ENCODE measurements at regions of chr11 and their contacts with region 1.

Region 1: GRCh38 chr11:68632802-68633201 is 51.5 kb upstream of the GAL start:
- DNase-seq: peak; percentile 50
- H3K4me3 ChIP-seq: no peak overlapping the region
- H3K27ac ChIP-seq: no peak overlapping the region
- H3K4me1 ChIP-seq: no peaks in the 10 kb centered on the region
- H3K27me3 ChIP-seq: no peaks in the 10 kb centered on the region
- CTCF ChIP-seq: peak; percentile 69 to 83

Region 2: GRCh38 chr11:68584097-68584496 is 48.7 kb before region 1 on chr11:
- CTCF ChIA-PET with region 1: no interaction called
- dilution Hi-C with region 1: loop called (anchors 5 kb)
- in situ Hi-C with region 1: no loop called
- intact Hi-C with region 1: no loop called
- DNase-seq: peak; percentile 3
- H3K4me3 ChIP-seq: no peak overlapping the region
- H3K27ac ChIP-seq: no peak overlapping the region
- H3K4me1 ChIP-seq: peaks cover 8% of the 10 kb centered on the region
- H3K27me3 ChIP-seq: no peaks in the 10 kb centered on the region
- CTCF ChIP-seq: peak; percentile 67 to 71

Region 3: DNA sequence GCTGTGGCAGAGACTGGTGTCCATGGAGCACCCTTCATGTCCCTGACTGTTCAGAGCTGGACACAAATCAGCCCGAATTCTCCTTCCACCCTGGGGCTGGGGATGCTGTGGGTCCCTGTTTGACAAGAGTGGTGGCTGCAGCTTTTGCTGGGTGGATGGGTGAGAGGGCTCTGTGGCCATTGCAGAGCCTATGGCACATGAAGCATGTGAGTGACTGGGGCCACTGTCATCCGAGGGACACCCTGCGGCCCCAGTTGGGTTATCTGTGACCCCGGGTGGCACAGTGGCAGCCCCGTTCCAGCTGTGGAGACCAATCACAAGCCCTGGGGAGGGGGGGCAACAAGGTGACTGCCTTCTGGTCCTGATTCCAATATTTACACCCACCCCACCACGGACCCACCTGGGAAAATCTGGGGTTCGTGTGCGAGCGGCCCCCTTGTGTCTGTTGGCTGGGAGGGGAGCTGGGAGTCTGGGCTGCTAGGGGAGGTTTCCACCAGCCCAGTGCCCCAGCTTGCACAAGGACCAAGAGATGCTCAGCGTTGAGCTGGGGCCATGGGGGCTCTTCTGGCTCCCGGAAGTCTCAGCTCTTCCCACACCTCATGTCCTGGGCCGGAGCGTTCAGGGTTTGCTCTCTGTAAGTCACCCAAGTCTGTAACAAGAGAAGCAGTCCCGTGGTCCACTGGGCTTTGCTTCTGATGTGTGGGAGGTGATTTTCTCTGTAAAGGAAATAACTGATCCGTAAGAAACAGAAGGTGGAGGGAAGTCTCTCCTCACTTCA is 28.9 kb after region 1 on chr11:
- CTCF ChIA-PET with region 1: no interaction called
- dilution Hi-C with region 1: loop called (anchors 5 kb)
- in situ Hi-C with region 1: no loop called
- intact Hi-C with region 1: no loop called
- DNase-seq: no peak
- H3K4me3 ChIP-seq: no peak overlapping the region
- H3K27ac ChIP-seq: no peak overlapping the region
- H3K4me1 ChIP-seq: no peaks in the 10 kb centered on the region
- H3K27me3 ChIP-seq: peaks cover 2% of the 10 kb centered on the region
- CTCF ChIP-seq: no peak

Region 4: DNA sequence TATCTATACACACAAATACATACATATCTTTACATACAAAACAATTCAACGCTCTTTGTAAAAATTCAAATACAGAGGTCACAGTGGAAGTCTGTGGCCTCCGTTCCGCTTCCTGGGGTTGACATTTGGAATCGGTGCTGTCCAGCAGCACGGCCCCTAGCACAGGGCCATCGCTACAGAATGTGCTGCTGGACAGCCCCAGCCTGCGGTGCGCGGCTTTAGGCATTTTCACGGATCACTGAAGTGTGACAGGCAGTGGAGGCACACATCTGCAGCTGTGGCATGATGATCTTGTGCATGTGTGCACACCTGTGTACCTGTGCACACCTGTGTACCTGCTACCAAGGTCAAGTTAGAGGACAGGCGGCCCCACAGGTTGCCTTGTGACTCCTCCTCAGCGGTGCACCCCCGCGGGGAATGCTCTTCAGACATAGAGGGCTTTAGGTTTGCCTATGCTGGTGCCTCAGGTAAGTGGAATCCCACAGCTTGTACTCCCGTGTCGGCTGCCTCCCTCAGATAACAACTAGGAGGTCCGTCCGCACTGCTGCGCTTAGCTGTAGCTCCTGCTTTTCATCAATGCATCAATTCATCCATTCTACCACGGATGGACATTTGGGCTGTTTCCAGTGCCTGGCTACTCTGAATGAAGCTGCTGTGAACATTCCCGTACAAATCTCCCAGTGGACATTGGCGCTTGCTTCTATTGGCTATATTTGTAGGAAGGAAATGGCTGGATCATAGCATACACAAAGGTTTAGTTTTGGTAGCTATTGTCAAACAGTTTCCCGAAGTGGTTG is 81.5 kb after region 1 on chr11:
- CTCF ChIA-PET with region 1: no interaction called
- dilution Hi-C with region 1: loop called (anchors 5 kb)
- in situ Hi-C with region 1: no loop called
- intact Hi-C with region 1: no loop called
- DNase-seq: no peak
- H3K4me3 ChIP-seq: no peak overlapping the region
- H3K27ac ChIP-seq: no peak overlapping the region
- H3K4me1 ChIP-seq: no peaks in the 10 kb centered on the region
- H3K27me3 ChIP-seq: no peaks in the 10 kb centered on the region
- CTCF ChIP-seq: no peak

Region 5: DNA sequence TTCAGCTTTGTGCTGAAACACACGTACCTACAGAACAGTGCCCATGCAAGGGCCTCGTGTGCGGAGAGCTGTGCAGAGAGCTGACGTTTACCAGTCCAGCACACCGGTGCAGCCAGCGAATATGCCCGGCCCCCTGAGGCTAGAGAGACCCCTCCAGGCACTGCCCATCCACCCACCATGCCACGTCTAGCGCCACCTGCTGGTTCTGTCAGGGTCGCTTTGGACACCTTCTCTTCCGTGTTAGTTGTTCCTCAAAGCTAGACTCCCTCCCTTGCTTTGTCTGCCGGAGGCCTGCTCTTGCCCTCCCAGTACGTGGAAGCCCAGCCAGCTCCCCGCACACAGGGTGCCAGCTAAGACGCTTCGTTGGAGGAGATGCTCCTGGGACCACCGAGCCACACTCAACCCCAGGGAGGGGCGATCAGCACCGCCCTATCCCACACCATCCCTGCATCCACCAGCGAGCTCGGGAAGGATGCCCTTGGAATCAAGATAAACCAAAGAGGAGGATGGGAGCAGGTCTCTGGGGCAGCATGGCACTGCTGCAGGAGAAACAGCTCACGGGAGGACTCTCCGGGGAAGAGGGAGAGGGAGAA is 165.5 kb after region 1 on chr11:
- CTCF ChIA-PET with region 1: no interaction called
- dilution Hi-C with region 1: no loop called
- in situ Hi-C with region 1: no loop called
- intact Hi-C with region 1: loop called (anchors 2 kb)
- DNase-seq: no peak
- H3K4me3 ChIP-seq: no peak overlapping the region
- H3K27ac ChIP-seq: no peak overlapping the region
- H3K4me1 ChIP-seq: no peaks in the 10 kb centered on the region
- H3K27me3 ChIP-seq: no peaks in the 10 kb centered on the region
- CTCF ChIP-seq: peak; percentile 41 to 62

Region 6: GRCh38 chr11:69044111-69045013 is 411.6 kb after region 1 on chr11:
- CTCF ChIA-PET with region 1: no interaction called
- dilution Hi-C with region 1: no loop called
- in situ Hi-C with region 1: no loop called
- intact Hi-C with region 1: loop called (anchors 2 kb)
- DNase-seq: peak; percentile 41
- H3K4me3 ChIP-seq: no peak overlapping the region
- H3K27ac ChIP-seq: no peak overlapping the region
- H3K4me1 ChIP-seq: peaks cover 3% of the 10 kb centered on the region
- H3K27me3 ChIP-seq: no peaks in the 10 kb centered on the region
- CTCF ChIP-seq: peak; percentile 47 to 71

Region 7: DNA sequence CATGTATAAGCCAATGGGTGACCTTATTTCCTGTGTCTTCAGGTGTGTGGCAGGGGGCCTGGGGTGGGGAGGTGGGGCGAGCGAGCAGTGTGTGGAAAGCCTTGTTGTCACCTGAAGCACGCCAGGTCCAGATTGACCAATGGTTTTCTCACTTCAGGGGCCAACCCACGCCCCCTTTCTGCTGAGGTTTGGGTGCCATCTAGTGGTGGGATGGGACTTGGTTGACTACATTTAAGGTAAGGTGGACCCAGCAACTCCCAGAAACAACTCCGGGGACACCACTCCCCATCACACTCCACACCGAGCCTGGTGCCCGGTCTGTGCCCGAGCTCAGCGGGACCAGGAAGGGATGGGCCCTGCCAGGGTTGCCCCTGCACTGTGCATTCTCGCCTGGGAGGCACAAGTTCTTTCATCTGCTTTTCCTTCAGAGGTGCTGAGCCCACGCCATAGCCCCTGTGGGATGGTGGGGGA is 455.9 kb after region 1 on chr11:
- CTCF ChIA-PET with region 1: no interaction called
- dilution Hi-C with region 1: no loop called
- in situ Hi-C with region 1: loop called in 1 of 2 experiments (anchors 25 kb)
- intact Hi-C with region 1: no loop called
- DNase-seq: peak; percentile 70
- H3K4me3 ChIP-seq: no peak overlapping the region
- H3K27ac ChIP-seq: no peak overlapping the region
- H3K4me1 ChIP-seq: peaks cover 7% of the 10 kb centered on the region
- H3K27me3 ChIP-seq: no peaks in the 10 kb centered on the region
- CTCF ChIP-seq: peak; percentile 74 to 81

Measured in mammary epithelial cell (primary cell).